PC-9 (cell line): ENCODE measurements at regions of chr7 and their contacts with region 1.

Region 1: DNA sequence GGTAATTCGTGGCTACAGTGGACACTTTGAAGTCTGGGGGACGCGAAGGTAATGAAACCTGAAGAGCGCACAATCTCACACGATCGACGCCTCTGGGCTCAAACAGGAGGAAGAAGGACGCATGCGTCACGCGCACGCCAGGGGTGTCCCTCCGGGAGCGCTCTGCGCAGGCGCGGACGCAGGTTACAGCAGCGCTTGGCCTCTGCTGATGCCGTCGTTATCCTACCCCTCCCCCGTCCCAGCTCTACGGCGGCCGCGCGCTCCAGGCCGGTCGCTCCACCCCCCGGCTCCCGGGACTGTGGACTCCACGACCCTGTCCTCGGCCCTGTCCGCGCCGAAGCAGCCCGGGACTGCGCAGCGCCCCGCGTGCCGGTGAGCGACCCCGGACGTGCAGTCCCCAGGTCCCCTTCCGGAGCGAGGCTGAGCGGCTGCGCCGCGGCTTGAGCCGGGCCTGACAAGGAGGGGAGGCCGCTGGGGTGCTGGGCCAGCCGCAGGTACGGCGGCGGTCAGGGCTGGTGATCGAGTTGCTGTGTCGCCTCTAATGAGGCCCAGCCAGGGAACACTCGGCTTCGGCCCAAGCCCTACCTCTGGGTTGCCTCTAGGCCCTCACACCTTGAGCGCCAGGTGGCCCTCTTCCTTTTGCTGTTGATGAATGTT is at the start of gene TMEM106B:
- DNase-seq: peak; percentile 93 to 98
- H3K4me3 ChIP-seq: peak within 1 kb of the TSS; percentile 74
- H3K27ac ChIP-seq: peak within 1 kb of the TSS; percentile 92
- H3K4me1 ChIP-seq: peaks cover 24% of the 10 kb centered on the region
- H3K27me3 ChIP-seq: no peaks in the 10 kb centered on the region
- CTCF ChIP-seq: peak; percentile 44; the same call in 1 of the 2 replicates
- total RNA-seq, gene TMEM106B: 61.1 and 64.4 TPM in 2 replicates

Region 2: GRCh38 chr7:11831736-11832495 is 379.3 kb before region 1 on chr7 and contains the start of gene THSD7A:
- CTCF ChIA-PET with region 1: no interaction called
- POLR2A ChIA-PET with region 1: no interaction called
- intact Hi-C with region 1: loop called (anchors 2 kb)
- DNase-seq: peak in 1 of 2 experiments; percentile 68
- H3K4me3 ChIP-seq: peak within 1 kb of the TSS; percentile 53
- H3K27ac ChIP-seq: no peak within 1 kb of the TSS
- H3K4me1 ChIP-seq: no peaks in the 10 kb centered on the region; the same call in 1 of the 2 replicates
- H3K27me3 ChIP-seq: no peaks in the 10 kb centered on the region
- CTCF ChIP-seq: no peak; the same call in 1 of the 2 replicates
- total RNA-seq, gene THSD7A: 1.6 and 4.0 TPM in 2 replicates

Region 3: DNA sequence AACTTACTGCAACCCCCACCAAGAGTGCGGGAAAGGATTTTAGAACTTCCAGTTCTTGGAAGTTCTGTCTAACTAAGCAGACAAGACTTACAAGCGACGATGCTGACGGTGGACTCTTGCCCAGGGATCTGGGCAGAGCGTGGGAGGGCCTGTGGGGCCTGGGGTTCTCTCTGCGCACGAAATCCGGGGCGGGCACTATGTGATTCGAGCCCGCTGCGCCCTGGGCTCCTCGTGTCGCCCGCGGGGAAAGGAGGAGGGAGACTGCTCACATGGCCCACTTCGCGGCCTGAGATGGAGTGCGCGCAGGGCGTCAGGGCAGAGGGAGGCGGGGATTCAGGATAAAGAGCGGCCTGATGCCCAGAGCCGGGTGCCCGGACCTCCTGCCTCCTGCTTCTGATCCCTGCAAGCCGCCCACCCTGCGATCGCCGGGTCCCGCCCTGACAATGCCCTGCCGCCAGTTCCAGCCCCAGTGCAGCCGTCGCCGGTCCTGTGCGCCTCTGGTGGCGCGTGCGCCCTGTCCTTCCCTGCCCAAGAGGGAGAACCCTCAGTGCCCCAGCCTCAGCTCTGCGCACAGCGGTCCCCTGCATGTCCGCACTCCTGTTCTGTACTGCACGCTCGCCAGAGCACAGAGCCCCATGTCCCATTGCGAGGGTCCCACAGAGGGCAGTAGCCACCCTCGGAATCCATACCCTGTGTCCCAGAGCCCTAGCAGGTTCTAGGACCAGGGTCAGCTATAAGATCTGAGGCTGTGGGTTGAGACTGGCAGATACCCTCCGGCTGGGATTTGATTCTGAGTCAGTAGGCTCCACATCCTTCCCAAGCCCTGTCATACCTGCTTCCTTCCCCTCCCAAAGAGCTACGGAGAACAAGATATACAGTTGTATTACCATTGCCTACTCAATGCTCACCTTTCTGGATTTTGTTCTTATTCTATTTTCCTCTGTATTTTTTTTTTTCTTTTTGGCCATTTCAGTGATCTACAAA is 99.5 kb before region 1 on chr7:
- CTCF ChIA-PET with region 1: no interaction called
- POLR2A ChIA-PET with region 1: no interaction called
- intact Hi-C with region 1: loop called (anchors 2 kb)
- DNase-seq: peak in 1 of 2 experiments; percentile 50
- H3K4me3 ChIP-seq: no peak overlapping the region
- H3K27ac ChIP-seq: no peak overlapping the region
- H3K4me1 ChIP-seq: no peaks in the 10 kb centered on the region; the same call in 1 of the 2 replicates
- H3K27me3 ChIP-seq: no peaks in the 10 kb centered on the region
- CTCF ChIP-seq: no peak

Region 4: GRCh38 chr7:12162415-12163113 is 48.6 kb before region 1 on chr7:
- CTCF ChIA-PET with region 1: no interaction called
- POLR2A ChIA-PET with region 1: no interaction called
- intact Hi-C with region 1: loop called (anchors 2 kb)
- DNase-seq: peak; percentile 19 to 83
- H3K4me3 ChIP-seq: no peak overlapping the region
- H3K27ac ChIP-seq: peak overlapping the region; percentile 55
- H3K4me1 ChIP-seq: peaks cover 29% of the 10 kb centered on the region
- H3K27me3 ChIP-seq: no peaks in the 10 kb centered on the region
- CTCF ChIP-seq: no peak

Region 5: GRCh38 chr7:12244129-12244528 is 32.9 kb after region 1 on chr7:
- CTCF ChIA-PET with region 1: no interaction called
- POLR2A ChIA-PET with region 1: no interaction called
- intact Hi-C with region 1: no loop called
- DNase-seq: peak in 1 of 2 experiments; percentile 16
- H3K4me3 ChIP-seq: no peak overlapping the region
- H3K27ac ChIP-seq: no peak overlapping the region
- H3K4me1 ChIP-seq: no peaks in the 10 kb centered on the region
- H3K27me3 ChIP-seq: no peaks in the 10 kb centered on the region
- CTCF ChIP-seq: peak; percentile 55

Region 6: DNA sequence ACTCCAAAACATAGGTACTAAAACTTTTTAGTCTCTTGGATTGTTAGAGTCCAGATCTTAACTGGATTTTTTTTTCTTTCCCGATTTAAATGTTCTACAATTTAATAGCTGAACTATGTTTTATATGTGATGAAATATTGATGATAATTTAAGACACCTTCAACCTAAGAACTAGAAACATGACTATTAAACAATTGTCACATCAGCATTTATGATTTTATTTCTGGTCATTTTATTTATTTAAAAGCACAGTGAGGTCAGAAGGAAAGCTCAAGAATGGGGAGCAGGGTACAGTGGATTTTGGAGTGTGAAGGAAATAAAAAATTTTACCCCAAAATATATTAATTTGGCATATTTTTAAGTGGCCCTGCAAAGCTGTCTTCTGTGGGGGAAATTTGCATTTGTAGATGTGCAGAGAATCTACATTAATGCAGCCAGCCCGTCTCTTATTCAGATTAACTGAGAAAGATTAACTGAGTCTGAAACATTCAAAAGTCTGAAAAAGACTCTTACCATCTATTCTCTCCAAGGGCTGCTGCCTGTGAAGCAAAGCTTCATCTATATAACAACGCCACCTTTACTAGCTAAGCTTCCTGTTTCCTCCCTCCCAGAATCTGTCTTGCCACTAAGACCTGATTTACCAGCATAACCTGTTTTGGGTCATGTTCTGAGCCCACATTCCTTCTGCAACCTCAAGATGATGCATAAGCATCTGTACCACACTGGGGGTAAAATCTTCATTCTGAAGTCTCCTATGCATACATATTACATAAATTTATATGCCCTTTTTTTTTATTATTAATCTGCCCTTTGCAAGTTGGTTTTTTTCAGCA is 86.3 kb after region 1 on chr7:
- CTCF ChIA-PET with region 1: no interaction called
- POLR2A ChIA-PET with region 1: no interaction called
- intact Hi-C with region 1: loop called (anchors 2 kb)
- DNase-seq: peak; percentile 60 to 94
- H3K4me3 ChIP-seq: no peak overlapping the region
- H3K27ac ChIP-seq: peak overlapping the region; percentile 14; the same call in 1 of the 2 replicates
- H3K4me1 ChIP-seq: peaks cover 18% of the 10 kb centered on the region
- H3K27me3 ChIP-seq: no peaks in the 10 kb centered on the region
- CTCF ChIP-seq: no peak

Region 7: GRCh38 chr7:12389089-12389700 is 178.0 kb after region 1 on chr7:
- CTCF ChIA-PET with region 1: no interaction called
- POLR2A ChIA-PET with region 1: no interaction called
- intact Hi-C with region 1: loop called (anchors 5 kb)
- DNase-seq: peak; percentile 50 to 52
- H3K4me3 ChIP-seq: no peak overlapping the region
- H3K27ac ChIP-seq: no peak overlapping the region
- H3K4me1 ChIP-seq: no peaks in the 10 kb centered on the region
- H3K27me3 ChIP-seq: no peaks in the 10 kb centered on the region
- CTCF ChIP-seq: peak; percentile 90

Region 8: GRCh38 chr7:13577566-13578145 is 1366.5 kb after region 1 on chr7:
- CTCF ChIA-PET with region 1: no interaction called
- POLR2A ChIA-PET with region 1: no interaction called
- intact Hi-C with region 1: no loop called
- DNase-seq: no peak
- H3K4me3 ChIP-seq: no peak overlapping the region
- H3K27ac ChIP-seq: no peak overlapping the region
- H3K4me1 ChIP-seq: no peaks in the 10 kb centered on the region
- H3K27me3 ChIP-seq: no peaks in the 10 kb centered on the region
- CTCF ChIP-seq: no peak